ENCODE measurements at regions of chr5 and their contacts with region 1.

Region 1: GRCh38 chr5:158423623-158424200 is 564.8 kb upstream of the CLINT1 start:
- DNase-seq: no peak
- ATAC-seq: peak in 2 of 4 donors; percentile 47 to 68
- H3K4me3 ChIP-seq: no peak overlapping the region
- H3K27ac ChIP-seq: peak overlapping the region; percentile 18 to 91 (median 78)
- H3K4me1 ChIP-seq: peaks cover 0 to 37% (median 13%) of the 10 kb centered on the region in 12 donors
- H3K27me3 ChIP-seq: no peaks in the 10 kb centered on the region
- CTCF ChIP-seq: no peak
- POLR2A ChIP-seq: no peak

Region 2: DNA sequence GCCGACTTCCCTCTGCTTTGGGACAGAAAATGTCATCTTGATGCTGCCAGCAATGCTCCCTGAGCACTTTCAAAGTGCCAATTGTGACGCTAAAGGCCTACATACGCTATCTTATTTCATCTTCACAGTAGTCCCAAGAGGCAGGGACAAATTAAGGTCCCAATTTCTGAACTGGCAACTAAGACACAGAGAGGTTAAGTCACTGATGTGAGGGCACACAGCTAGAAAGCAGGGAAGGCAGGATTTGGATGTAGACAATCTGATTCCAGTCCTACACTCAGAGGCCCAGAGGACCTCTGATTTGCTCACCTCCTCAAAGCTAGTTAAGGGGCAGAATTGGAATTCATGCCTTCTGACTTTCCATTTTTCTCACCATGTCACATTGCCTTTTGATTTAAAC is 315.5 kb before region 1 on chr5:
- intact Hi-C with region 1: no loop called
- DNase-seq: no peak
- ATAC-seq: no peak
- H3K4me3 ChIP-seq: no peak overlapping the region
- H3K27ac ChIP-seq: no peak overlapping the region
- H3K4me1 ChIP-seq: no peaks in the 10 kb centered on the region
- H3K27me3 ChIP-seq: no peaks in the 10 kb centered on the region
- CTCF ChIP-seq: no peak
- POLR2A ChIP-seq: no peak

Region 3: GRCh38 chr5:158382473-158382872 is 41.2 kb before region 1 on chr5:
- intact Hi-C with region 1: no loop called
- DNase-seq: peak; percentile 43 to 75 (median 67)
- ATAC-seq: peak; percentile 76 to 96 (median 93)
- H3K4me3 ChIP-seq: no peak overlapping the region
- H3K27ac ChIP-seq: peak overlapping the region in 2 of 12 donors; percentile 1 to 64
- H3K4me1 ChIP-seq: peaks cover 0 to 38% (median 3%) of the 10 kb centered on the region in 12 donors
- H3K27me3 ChIP-seq: peaks cover 0 to 4% (median 0%) of the 10 kb centered on the region in 9 donors
- CTCF ChIP-seq: no peak
- POLR2A ChIP-seq: no peak

Region 4: DNA sequence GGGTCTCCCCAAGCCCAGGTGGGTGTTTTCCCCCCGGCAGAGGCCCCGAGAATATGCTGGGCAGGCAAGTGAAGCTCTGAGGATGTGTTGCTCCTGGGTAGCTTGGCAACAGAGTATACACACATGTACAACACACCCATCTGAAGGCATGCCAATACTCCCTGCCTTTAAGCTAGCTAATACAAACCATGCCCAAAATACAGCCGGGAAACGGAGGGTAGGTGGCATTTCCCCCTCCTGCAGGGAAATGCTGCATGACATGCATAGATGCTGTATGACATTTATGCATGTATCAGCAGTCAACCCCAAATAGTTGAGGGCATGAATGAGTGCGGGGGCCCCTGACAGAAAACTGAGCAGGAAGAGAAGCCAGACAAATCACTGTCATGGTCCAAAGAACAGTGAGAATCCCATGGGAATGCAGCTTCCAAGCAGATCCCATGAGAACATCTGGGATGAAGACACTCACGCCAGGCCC is 61.9 kb after region 1 on chr5:
- intact Hi-C with region 1: loop called in 1 of 10 experiments (anchors 5 kb)
- DNase-seq: peak in 4 of 5 donors; percentile 35 to 57 (median 46)
- ATAC-seq: peak; percentile 48 to 71 (median 64)
- H3K4me3 ChIP-seq: no peak overlapping the region
- H3K27ac ChIP-seq: peak overlapping the region; percentile 2 to 85 (median 64)
- H3K4me1 ChIP-seq: peaks cover 0 to 70% (median 27%) of the 10 kb centered on the region in 12 donors
- H3K27me3 ChIP-seq: no peaks in the 10 kb centered on the region
- CTCF ChIP-seq: no peak
- POLR2A ChIP-seq: no peak

Region 5: GRCh38 chr5:158619083-158619788 is 195.5 kb after region 1 on chr5:
- intact Hi-C with region 1: loop called in 1 of 10 experiments (anchors 5 kb)
- DNase-seq: peak in 1 of 5 donors; percentile 19
- ATAC-seq: peak in 2 of 4 donors; percentile 53 to 62
- H3K4me3 ChIP-seq: no peak overlapping the region
- H3K27ac ChIP-seq: peak overlapping the region in 7 of 12 donors; percentile 14 to 51 (median 36)
- H3K4me1 ChIP-seq: peaks cover 0 to 34% (median 14%) of the 10 kb centered on the region in 12 donors
- H3K27me3 ChIP-seq: no peaks in the 10 kb centered on the region
- CTCF ChIP-seq: no peak
- POLR2A ChIP-seq: no peak

Region 6: DNA sequence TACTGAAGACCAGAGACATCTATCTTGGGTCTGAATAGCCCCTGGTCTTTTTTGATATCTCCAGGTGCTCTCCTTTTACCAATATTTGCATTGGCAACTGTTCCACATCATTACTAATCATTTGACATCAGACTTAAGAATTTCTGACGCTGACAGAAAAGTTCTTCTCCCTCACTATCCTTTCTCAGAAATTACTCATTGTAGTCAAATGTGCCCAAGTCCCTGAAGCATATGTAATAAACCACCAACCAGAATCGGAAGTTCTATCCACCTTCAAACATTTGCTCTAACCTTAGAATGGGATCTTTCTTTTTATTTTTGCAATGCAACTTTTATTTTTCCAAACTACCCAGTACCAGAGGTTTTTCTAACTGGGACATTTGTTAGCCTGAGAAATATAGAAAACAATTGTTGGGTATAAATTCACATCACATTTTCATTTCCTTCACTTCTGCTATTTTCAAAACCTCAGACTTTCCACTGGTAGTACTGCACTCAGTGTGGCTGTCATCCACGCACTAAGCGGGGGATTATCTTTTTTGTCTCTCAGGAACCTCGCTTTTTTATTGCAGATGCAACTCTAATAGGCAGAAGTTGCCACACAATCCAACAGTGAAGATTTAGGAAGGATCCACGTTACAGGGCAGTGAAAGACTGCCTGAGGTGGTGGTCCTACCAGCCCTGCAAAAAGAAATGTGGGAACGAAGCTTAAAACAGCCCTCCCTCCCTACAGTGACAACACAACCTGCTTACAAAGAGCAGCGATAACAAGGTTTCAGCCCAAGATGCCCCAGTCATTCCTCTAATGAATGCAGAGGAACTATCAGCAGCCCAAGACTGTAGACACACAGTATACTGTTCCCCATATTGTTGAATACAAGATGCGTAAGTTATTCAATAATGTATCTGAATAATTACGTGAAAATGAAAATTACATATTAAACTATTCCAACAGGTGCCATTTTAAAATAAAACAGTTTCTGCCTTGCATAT is 474.8 kb after region 1 on chr5:
- intact Hi-C with region 1: no loop called
- DNase-seq: no peak
- ATAC-seq: no peak
- H3K4me3 ChIP-seq: no peak overlapping the region
- H3K27ac ChIP-seq: no peak overlapping the region
- H3K4me1 ChIP-seq: peaks cover 0 to 48% (median 15%) of the 10 kb centered on the region in 12 donors
- H3K27me3 ChIP-seq: no peaks in the 10 kb centered on the region
- CTCF ChIP-seq: no peak
- POLR2A ChIP-seq: no peak

Measured in heart left ventricle (tissue), 16 donors.